ENCODE measurements at regions of chr19 and their contacts with region 1.

Region 1: GRCh38 chr19:36054119-36054732 is at the start of gene THAP8:
- H3K4me3 Mint-ChIP-seq: peak within 1 kb of the TSS; percentile 97
- H3K27ac Mint-ChIP-seq: peak within 1 kb of the TSS; percentile 89
- H3K4me1 Mint-ChIP-seq: peaks cover 43% of the 10 kb centered on the region
- H3K27me3 Mint-ChIP-seq: no peaks in the 10 kb centered on the region

Region 2: DNA sequence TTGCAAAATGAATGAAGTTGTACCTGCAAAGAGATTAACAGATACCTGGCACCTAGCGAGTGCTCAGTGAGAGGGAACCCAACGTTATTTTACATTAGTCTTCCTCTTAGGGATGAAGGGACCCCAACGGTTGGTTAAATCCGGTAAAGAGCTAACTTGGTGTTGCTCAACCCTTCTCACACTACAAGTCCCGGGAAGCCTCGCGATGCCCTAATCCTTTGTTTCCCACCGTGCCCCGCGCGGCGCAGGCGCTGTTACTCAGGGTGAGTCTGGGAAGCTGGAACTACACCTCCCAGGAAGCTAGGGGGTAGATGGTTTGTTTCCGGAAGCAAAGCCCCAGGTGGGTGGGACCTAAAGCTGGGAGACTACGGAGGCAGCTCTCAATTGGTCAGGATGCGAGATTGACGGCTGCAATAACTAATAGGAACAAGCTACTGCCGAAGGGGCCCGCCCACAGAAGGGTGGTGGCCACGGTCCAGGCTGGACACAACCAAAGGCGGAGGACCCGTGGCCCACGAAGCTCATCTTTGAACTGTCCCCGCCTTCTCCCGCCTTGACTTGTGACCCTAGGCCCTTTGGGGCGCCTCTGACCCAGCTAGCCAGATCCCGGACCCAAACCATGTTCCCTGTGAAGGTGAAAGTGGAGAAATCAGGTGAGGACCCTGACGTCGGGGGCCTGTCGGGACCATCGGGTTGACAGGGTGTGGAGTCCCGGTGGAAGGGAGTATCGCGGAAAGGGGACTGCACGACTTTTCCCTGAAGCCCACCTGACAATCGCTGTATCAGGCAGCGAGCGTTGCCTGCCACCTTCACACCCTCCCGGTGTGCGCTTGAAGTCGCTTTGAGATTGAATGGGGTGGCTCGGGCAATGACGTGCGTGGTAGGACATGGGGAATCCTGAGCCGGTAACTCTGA is 305.9 kb before region 1 on chr19 and contains the start of gene LIN37:
- intact Hi-C with region 1: loop called (anchors 5 kb)
- H3K4me3 Mint-ChIP-seq: peak within 1 kb of the TSS; percentile 92
- H3K27ac Mint-ChIP-seq: peak within 1 kb of the TSS; percentile 86
- H3K4me1 Mint-ChIP-seq: peaks cover 64% of the 10 kb centered on the region
- H3K27me3 Mint-ChIP-seq: no peaks in the 10 kb centered on the region

Region 3: DNA sequence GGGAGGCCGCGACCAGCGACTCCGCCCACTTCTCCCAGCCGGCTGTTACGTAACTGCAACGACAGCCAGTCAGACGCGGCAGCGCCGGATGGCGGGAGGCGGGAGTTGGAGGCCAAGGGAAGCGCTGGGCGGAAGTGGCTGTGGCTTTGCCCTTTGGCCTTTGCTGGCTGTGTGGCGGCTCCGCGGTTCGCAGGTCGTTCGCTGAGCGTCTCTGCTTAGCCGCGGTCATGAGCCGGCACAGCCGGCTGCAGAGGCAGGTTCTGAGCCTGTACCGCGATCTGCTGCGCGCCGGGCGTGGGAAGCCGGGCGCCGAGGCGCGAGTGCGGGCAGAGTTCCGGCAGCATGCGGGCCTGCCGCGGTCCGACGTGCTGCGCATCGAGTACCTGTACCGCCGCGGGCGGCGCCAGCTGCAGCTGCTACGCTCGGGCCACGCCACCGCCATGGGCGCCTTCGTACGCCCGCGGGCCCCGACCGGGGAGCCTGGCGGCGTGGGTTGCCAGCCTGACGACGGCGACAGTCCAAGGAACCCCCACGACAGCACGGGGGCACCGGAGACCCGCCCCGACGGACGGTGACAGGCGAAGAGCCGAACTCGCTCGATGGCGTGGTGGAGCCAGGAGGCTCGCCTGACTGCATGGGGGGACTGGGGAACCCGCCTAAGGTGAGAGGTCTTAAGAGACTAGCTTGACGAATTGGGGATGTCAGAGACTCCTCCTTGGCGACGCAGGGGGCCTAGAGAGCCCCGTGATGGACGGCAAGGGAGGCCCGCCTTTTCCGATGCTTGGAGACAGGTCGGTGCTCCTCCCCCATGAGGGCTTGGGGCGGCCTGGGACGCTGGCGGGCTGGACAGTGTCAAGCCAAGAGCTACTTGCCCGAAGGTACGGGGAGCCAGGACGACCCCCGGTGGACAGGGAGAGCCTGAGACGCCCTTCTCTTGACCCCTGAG is 58.9 kb before region 1 on chr19 and contains the start of gene SDHAF1:
- intact Hi-C with region 1: loop called (anchors 5 kb)
- H3K4me3 Mint-ChIP-seq: peak within 1 kb of the TSS; percentile 84
- H3K27ac Mint-ChIP-seq: peak within 1 kb of the TSS; percentile 86
- H3K4me1 Mint-ChIP-seq: peaks cover 52% of the 10 kb centered on the region
- H3K27me3 Mint-ChIP-seq: no peaks in the 10 kb centered on the region

Region 4: DNA sequence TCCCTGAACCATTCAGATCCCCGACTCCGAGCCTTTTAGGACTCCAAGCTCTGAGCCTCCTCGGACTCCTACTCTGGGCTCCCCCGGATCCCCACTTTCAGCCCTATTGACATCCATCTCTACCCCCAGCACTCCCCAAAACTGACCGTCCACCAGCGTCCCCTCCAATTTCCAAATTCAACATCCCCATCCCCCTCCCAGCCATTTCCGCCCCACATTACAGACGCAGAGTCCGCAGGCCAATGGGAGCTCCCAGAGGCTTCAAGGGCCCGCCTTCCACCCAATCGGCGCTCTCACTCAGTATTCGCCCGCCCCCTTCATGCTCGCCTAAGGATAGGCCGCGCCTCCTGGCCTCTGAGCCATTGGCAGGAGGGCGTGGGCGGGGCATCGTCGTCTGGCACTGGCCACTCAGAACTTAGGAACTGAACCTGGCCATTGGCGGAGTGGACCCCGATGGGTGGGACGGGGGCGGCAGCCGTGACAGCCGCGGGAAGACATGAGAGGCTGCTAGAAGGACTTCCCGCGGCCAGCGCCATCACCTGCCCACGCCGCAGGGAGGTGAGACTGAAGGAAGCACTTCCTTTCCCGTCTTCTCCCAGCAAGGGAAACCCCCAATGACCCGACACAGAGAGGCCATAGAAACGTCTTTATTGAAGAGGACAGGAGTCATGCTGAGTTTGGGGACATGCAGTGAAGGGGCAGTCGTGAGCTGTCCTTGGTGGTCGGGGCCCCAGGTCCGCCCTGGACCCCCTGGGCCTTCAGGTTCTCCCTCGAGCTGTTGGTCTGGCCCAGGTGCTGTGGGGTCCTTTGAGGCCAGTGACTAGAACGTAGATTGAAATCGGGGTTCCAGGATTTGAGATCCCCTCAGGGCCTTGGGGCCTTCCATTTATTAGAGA is 39.9 kb before region 1 on chr19 and contains the start of gene ALKBH6:
- intact Hi-C with region 1: loop called (anchors 2 kb)
- H3K4me3 Mint-ChIP-seq: peak within 1 kb of the TSS; percentile 97
- H3K27ac Mint-ChIP-seq: peak within 1 kb of the TSS; percentile 98
- H3K4me1 Mint-ChIP-seq: peaks cover 45% of the 10 kb centered on the region
- H3K27me3 Mint-ChIP-seq: peaks cover 12% of the 10 kb centered on the region

Region 5: DNA sequence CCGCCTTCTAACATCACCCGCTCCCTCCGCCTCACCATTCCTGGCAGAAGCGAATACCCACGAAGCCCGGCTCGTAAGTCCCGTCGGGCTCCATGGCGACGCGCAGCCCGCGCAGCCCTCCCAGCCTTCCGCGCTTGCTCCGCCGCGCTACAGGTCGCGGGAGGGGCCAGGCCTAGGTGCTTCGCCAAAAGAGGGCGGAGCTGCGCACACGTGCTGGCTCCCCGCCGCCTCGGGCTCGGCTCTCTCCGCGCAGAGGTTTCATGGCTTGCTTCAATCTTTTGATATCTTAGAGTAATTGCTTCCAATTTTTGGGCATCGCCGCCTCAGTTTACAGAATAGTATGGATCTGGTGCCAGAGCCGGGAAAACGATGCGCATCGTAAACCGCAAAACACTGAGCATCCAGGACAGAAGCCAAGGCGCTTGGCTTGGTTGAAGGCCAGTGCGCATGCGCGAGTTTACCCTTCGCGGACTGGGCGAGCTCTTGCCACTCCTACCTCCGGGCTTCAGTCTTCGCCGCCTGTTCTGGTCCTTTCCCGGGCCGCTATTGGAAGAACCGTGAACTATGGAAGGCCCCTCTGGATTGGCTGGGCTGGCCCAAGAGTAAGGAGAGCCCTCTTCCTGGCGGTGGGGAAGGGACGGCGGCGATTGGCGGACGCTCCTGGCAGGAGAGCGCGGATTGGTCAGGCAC is 60.7 kb after region 1 on chr19 and contains the start of gene POLR2I:
- intact Hi-C with region 1: loop called (anchors 1 kb)
- H3K4me3 Mint-ChIP-seq: peak within 1 kb of the TSS; percentile 90
- H3K27ac Mint-ChIP-seq: peak within 1 kb of the TSS; percentile 90
- H3K4me1 Mint-ChIP-seq: peaks cover 41% of the 10 kb centered on the region
- H3K27me3 Mint-ChIP-seq: no peaks in the 10 kb centered on the region